Naive thymus-derived CD8-positive, alpha-beta T cell (primary cell): ENCODE measurements at regions of chr21 and their contacts with region 1.

Region 1: DNA sequence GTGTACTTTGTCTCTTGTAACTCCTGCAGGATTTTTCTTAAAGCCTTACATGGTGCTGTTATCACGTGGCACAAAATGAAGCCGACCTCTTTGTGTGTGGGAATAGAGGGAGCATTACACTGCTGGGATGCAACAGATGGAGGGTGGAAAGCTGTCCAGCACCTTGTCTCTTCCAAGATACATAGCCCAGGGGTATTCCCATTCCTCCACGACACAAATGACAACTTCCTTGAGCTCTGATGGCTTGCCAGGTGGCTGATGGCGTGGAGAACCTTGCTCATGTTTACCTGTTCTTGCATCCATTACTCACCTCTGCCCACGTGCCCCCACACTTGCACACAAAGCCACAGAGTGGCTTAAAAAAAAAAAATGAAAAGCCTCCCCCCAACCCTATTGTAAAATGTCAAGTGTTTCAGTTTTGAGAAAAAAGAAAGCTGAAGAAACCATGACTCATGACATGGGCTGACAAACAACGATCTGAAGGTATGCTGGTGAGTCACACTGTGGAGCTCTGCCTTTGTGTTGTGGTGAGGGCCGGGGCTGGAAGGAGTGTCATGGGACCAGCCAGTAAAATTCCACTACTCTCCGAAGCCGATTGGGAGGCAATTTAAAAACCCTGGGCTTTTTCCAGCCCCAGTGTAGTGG is 32.0 kb upstream of the ATP5PO start:
- DNase-seq: peak; percentile 62 to 95 (median 86)
- ATAC-seq: peak; percentile 60 to 65
- H3K4me3 Mint-ChIP-seq: peak overlapping the region; percentile 66 to 91 (median 78)
- H3K27ac Mint-ChIP-seq: peak overlapping the region; percentile 94 to 100 (median 98)
- H3K4me1 Mint-ChIP-seq: peaks cover 44 to 87% (median 80%) of the 10 kb centered on the region in 4 donors
- H3K27me3 Mint-ChIP-seq: no peaks in the 10 kb centered on the region

Region 2: GRCh38 chr21:33924079-33924765 is 23.4 kb before region 1 on chr21:
- POLR2A ChIA-PET with region 1: interaction called, 56 read pairs
- DNase-seq: peak; percentile 73 to 93 (median 86)
- ATAC-seq: peak; percentile 93 to 97
- H3K4me3 Mint-ChIP-seq: peak overlapping the region in 5 of 10 donors; percentile 1 to 68 (median 43)
- H3K27ac Mint-ChIP-seq: peak overlapping the region; percentile 25 to 94 (median 75)
- H3K4me1 Mint-ChIP-seq: peaks cover 3 to 15% (median 11%) of the 10 kb centered on the region in 4 donors
- H3K27me3 Mint-ChIP-seq: no peaks in the 10 kb centered on the region

Region 3: DNA sequence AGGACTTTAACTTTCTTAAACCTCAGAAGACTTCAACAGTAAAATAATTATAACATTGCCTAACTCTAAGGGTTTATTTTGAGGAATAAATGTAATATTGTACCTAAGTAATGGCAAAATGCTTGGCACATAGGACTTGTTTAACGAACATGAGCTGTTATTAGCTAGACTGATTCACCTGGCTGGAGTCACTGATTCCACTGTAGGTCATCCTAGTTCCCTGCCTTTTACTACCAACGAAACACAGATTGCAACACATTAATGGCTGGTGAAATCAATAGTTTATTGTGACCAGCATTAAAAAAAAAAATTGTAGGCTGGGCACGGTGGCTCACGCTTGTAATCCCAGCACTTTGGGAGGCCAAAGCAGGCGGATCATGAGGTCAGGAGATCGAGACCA is 13.5 kb after region 1 on chr21:
- POLR2A ChIA-PET with region 1: interaction called, 10 read pairs
- DNase-seq: no peak
- ATAC-seq: no peak
- H3K4me3 Mint-ChIP-seq: no peak overlapping the region
- H3K27ac Mint-ChIP-seq: peak overlapping the region in 2 of 10 donors; percentile 29 to 33
- H3K4me1 Mint-ChIP-seq: peaks cover 19 to 45% (median 28%) of the 10 kb centered on the region in 4 donors
- H3K27me3 Mint-ChIP-seq: no peaks in the 10 kb centered on the region

Region 4: GRCh38 chr21:33976082-33977016 is 28.8 kb after region 1 on chr21:
- POLR2A ChIA-PET with region 1: interaction called, 28 read pairs
- DNase-seq: peak in 7 of 10 donors; percentile 32 to 68 (median 37)
- ATAC-seq: peak; percentile 61 to 83
- H3K4me3 Mint-ChIP-seq: peak overlapping the region; percentile 47 to 85 (median 72)
- H3K27ac Mint-ChIP-seq: peak overlapping the region; percentile 79 to 97 (median 90)
- H3K4me1 Mint-ChIP-seq: peaks cover 34 to 65% (median 57%) of the 10 kb centered on the region in 4 donors
- H3K27me3 Mint-ChIP-seq: no peaks in the 10 kb centered on the region

Region 5: GRCh38 chr21:34091607-34092006 is 144.0 kb after region 1 on chr21:
- POLR2A ChIA-PET with region 1: interaction called, 15 read pairs
- DNase-seq: no peak
- ATAC-seq: no peak
- H3K4me3 Mint-ChIP-seq: peak overlapping the region in 4 of 10 donors; percentile 9 to 49 (median 22)
- H3K27ac Mint-ChIP-seq: peak overlapping the region in 6 of 10 donors; percentile 1 to 62 (median 53)
- H3K4me1 Mint-ChIP-seq: peaks cover 27 to 68% (median 61%) of the 10 kb centered on the region in 4 donors
- H3K27me3 Mint-ChIP-seq: no peaks in the 10 kb centered on the region

Region 6: DNA sequence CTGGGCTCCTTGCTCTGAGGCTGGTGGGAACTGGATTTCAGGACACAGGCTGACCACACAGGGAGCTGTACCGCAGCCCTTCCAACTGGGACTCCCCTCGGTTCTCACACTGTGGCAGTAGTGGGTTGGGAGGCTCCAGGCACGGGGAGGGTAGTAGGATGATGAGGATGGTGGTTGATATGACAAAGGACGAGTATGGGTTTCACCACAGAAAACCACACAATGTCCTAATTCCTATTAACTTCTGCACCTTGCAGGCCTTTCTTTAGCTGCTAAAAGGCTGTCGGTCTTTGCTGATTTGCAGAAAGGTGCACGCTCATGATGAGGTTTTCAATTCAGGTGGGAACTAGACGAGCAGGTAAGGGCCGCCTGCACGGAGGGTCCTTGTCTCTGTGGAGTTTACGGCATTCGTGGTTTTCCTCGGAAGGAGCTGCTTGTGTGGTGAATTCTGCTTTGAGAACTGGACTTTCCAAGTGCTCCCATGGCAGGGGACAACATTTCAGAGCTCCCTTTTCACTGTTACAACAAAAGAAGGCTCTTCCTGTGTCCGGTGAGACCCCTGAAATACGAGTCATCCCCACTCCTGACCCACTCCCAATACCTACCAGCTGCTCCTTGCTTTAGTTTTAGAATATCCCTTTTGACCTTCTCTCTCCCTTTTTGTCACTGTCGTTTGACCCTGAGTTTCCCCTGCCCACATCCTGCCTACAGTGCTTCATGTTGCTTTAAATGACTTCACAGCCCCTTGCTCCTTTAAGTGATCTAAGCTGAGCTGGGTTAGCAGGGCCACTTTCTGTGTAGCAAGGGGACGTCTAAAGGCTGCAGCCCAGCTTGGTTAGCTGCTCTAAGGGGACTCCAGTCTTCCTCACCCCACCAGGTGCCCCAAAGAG is 250.9 kb after region 1 on chr21:
- POLR2A ChIA-PET with region 1: interaction called, 17 read pairs
- DNase-seq: peak in 6 of 10 donors; percentile 7 to 50 (median 32)
- ATAC-seq: peak; percentile 71 to 82
- H3K4me3 Mint-ChIP-seq: peak overlapping the region; percentile 29 to 79 (median 64)
- H3K27ac Mint-ChIP-seq: peak overlapping the region; percentile 68 to 91 (median 82)
- H3K4me1 Mint-ChIP-seq: peaks cover 24 to 57% (median 53%) of the 10 kb centered on the region in 4 donors
- H3K27me3 Mint-ChIP-seq: peaks cover 0 to 2% (median 0%) of the 10 kb centered on the region in 5 donors

Region 7: DNA sequence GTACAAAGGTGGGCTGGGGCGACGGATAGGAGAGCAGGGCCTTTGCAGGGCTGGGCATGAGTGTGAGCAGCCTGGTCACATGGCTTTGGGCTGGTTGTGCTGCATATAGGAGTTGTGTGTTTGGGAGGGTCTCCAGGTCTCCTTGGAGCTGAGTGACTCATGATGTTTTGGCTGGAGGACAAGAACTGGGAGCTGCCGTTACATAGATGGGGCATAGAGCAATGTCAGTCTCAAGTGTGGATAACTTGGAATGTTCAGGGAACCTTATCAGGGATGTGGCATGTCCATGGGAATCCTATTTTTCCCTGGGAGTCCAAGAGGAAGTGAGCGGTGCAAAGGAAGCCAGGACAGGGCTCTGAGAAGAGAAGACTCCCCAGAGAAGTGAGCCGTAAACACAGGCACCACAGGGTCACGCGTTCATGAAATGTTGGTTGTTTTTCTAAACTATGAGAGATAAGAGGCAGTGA is 279.8 kb after region 1 on chr21:
- POLR2A ChIA-PET with region 1: no interaction called
- DNase-seq: no peak
- ATAC-seq: no peak
- H3K4me3 Mint-ChIP-seq: no peak overlapping the region
- H3K27ac Mint-ChIP-seq: no peak overlapping the region
- H3K4me1 Mint-ChIP-seq: no peaks in the 10 kb centered on the region
- H3K27me3 Mint-ChIP-seq: peaks cover 0 to 3% (median 1%) of the 10 kb centered on the region in 5 donors